ENCODE measurements at regions of chr1 and their contacts with region 1.

Region 1: GRCh38 chr1:172357753-172358385 is 62.6 kb upstream of the C1orf105 start:
- DNase-seq: no peak
- H3K4me3 Mint-ChIP-seq: no peak overlapping the region
- H3K27ac Mint-ChIP-seq: peak overlapping the region; percentile 55
- H3K4me1 Mint-ChIP-seq: peaks cover 64% of the 10 kb centered on the region
- H3K27me3 Mint-ChIP-seq: no peaks in the 10 kb centered on the region

Region 2: GRCh38 chr1:172135076-172135672 is 222.7 kb before region 1 on chr1:
- CTCF ChIA-PET with region 1: no interaction called
- intact Hi-C with region 1: loop called (anchors 1 kb)
- DNase-seq: peak; percentile 43
- H3K4me3 Mint-ChIP-seq: no peak overlapping the region
- H3K27ac Mint-ChIP-seq: no peak overlapping the region
- H3K4me1 Mint-ChIP-seq: peaks cover 17% of the 10 kb centered on the region
- H3K27me3 Mint-ChIP-seq: no peaks in the 10 kb centered on the region

Region 3: DNA sequence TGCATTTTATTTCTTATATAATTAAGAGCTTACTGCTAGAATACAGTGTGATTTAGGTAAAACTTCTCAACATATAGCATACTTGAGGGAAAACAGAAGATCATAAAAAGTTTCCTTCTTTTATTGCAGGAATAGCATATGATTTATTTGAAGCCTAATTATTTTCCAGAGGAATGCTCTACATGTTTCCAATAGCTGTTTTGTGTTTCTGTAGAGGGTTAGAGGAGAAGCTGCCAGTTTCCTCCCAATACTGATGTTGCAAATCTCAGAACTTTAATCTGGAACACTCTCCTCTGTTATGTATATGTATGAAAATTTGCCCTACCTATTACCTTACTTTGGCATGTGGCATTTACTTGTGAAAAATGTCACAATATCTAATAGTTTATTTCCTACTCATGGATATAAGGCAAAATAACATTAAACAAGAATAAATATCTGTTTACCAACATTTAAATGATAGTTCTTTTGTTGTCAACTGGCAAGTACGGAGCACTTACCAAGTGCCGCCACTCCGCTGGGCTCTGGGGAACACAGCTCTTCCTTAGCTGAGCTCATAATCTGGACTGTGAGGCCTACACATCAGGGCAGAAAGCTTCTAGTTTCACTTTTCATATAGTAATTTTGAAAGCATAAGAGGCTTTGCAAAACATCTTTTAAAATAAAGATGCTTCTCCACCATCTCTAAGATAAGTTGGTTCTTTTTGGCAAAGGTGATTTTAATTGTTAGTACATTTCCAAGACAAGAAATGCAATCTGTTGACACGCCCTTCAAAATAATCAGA is 177.2 kb before region 1 on chr1:
- CTCF ChIA-PET with region 1: interaction called, 3 read pairs
- intact Hi-C with region 1: loop called (anchors 5 kb)
- DNase-seq: peak; percentile 63
- H3K4me3 Mint-ChIP-seq: peak overlapping the region; percentile 67
- H3K27ac Mint-ChIP-seq: peak overlapping the region; percentile 89
- H3K4me1 Mint-ChIP-seq: peaks cover 40% of the 10 kb centered on the region
- H3K27me3 Mint-ChIP-seq: no peaks in the 10 kb centered on the region

Region 4: DNA sequence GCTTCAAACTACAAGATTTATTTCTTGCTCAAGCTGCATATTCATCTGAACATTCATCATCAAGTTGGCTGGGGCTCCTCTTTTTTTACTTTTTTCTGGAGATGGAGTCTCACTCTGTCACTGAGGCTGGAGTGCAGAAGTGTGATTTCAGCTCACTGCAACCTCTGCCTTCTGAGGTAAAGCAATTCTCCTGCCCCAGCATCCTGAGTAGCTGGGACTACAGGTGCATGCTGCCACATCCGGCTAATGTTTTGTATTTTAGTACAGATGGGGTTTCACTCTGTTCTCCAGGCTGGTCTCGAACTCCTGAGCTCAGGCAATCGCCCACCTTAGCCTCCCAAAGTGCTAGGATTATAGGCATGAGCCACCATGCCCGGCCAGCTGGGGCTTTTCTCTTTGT is 25.6 kb before region 1 on chr1:
- CTCF ChIA-PET with region 1: no interaction called
- intact Hi-C with region 1: no loop called
- DNase-seq: no peak
- H3K4me3 Mint-ChIP-seq: no peak overlapping the region
- H3K27ac Mint-ChIP-seq: no peak overlapping the region
- H3K4me1 Mint-ChIP-seq: peaks cover under 1% of the 10 kb centered on the region
- H3K27me3 Mint-ChIP-seq: no peaks in the 10 kb centered on the region

Region 5: GRCh38 chr1:172343240-172344160 is 14.4 kb before region 1 on chr1:
- CTCF ChIA-PET with region 1: interaction called, 25 read pairs
- intact Hi-C with region 1: loop called (anchors 1 kb)
- DNase-seq: no peak
- H3K4me3 Mint-ChIP-seq: no peak overlapping the region
- H3K27ac Mint-ChIP-seq: no peak overlapping the region
- H3K4me1 Mint-ChIP-seq: peaks cover 52% of the 10 kb centered on the region
- H3K27me3 Mint-ChIP-seq: no peaks in the 10 kb centered on the region

Region 6: GRCh38 chr1:172380441-172381244 is 22.8 kb after region 1 on chr1:
- CTCF ChIA-PET with region 1: interaction called, 5 read pairs
- intact Hi-C with region 1: loop called (anchors 1 kb)
- DNase-seq: peak; percentile 68
- H3K4me3 Mint-ChIP-seq: peak overlapping the region; percentile 67
- H3K27ac Mint-ChIP-seq: peak overlapping the region; percentile 86
- H3K4me1 Mint-ChIP-seq: peaks cover 31% of the 10 kb centered on the region
- H3K27me3 Mint-ChIP-seq: no peaks in the 10 kb centered on the region

Region 7: DNA sequence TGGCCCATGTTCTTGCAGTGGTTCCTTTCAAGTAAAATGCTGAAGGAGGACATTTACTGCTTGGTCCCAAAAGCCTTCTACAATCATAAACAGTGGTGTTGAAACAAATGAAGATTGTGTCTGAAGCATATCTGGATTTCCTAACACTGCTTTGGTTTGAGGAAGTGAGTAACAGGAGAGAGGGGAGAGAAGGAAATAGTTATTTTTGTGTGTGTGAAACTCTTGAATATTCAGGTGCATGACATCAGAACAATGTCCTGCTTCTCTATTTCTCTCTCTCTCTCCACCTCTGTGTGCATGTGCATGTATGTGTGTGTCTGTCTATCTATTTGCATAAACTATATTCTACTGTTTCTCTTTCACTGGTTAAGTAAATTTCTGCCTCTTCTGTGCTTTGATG is 754.3 kb after region 1 on chr1:
- CTCF ChIA-PET with region 1: no interaction called
- intact Hi-C with region 1: no loop called
- DNase-seq: no peak
- H3K4me3 Mint-ChIP-seq: no peak overlapping the region
- H3K27ac Mint-ChIP-seq: no peak overlapping the region
- H3K4me1 Mint-ChIP-seq: peaks cover 4% of the 10 kb centered on the region
- H3K27me3 Mint-ChIP-seq: no peaks in the 10 kb centered on the region